ENCODE measurements at regions of chr3 and their contacts with region 1.

Region 1: GRCh38 chr3:47009225-47010110 is 30.0 kb downstream of the NBEAL2 start:
- DNase-seq: peak; percentile 75
- H3K4me3 Mint-ChIP-seq: no peak overlapping the region
- H3K27ac Mint-ChIP-seq: no peak overlapping the region
- H3K4me1 Mint-ChIP-seq: peaks cover 7% of the 10 kb centered on the region
- H3K27me3 Mint-ChIP-seq: no peaks in the 10 kb centered on the region

Region 2: DNA sequence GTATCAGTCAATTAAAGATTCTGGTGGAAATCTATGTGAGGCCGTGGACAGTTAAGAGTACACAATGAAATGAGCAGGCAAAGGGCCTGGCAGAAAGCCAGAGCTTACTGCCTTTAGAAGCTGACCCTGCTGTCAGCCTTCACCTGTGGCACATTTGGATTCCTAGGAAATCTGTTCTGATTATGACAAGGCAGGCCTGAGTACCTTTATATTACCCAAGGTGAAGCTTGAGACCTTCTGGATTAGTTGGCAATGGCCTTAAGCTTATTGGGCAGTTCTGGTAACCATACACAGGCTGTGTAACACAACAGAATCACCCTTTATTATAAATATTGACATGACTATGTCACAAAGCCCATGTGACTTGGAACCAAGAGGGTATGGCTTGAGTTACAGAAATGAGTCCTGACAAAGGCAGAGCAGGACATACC is 13.2 kb after region 1 on chr3:
- CTCF ChIA-PET with region 1: no interaction called
- POLR2A ChIA-PET with region 1: no interaction called
- intact Hi-C with region 1: no loop called
- DNase-seq: no peak
- H3K4me3 Mint-ChIP-seq: no peak overlapping the region
- H3K27ac Mint-ChIP-seq: no peak overlapping the region
- H3K4me1 Mint-ChIP-seq: peaks cover 56% of the 10 kb centered on the region
- H3K27me3 Mint-ChIP-seq: no peaks in the 10 kb centered on the region

Region 3: GRCh38 chr3:47324278-47324865 is 314.9 kb after region 1 on chr3:
- CTCF ChIA-PET with region 1: no interaction called
- POLR2A ChIA-PET with region 1: no interaction called
- intact Hi-C with region 1: loop called (anchors 10 kb)
- DNase-seq: peak; percentile 64
- H3K4me3 Mint-ChIP-seq: no peak overlapping the region
- H3K27ac Mint-ChIP-seq: no peak overlapping the region
- H3K4me1 Mint-ChIP-seq: peaks cover 3% of the 10 kb centered on the region
- H3K27me3 Mint-ChIP-seq: no peaks in the 10 kb centered on the region

Measured in activated CD4-positive, alpha-beta memory T cell treated with anti-CD3 and anti-CD28 coated beads for 36 hours (primary cell).